ENCODE measurements at regions of chr10 and their contacts with region 1.

Region 1: DNA sequence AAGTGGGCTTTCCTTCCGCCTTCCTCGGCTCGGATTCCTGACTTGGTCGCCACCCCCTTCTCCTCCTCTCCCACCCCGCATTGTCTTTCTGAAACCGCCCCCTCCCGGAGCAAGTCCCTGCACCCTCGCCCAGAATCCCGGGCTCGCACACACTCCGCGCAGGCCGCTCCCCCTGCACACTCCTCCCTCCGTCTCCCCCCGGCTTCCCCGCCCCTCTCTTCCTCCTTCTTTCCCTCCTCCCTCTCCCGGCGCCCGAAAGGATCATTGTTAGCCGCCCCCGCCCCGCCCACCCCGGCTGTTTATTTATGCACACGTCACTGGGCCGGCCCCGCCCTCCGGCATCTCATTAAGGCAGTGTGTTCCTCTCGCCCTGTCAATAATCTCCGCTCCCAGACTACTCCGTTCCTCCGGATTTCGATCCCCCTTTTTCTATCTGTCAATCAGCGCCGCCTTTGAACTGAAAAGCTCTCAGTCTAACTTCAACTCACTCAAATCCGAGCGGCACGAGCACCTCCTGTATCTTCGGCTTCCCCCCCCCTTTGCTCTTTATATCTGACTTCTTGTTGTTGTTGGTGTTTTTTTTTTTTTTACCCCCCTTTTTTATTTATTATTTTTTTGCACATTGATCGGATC is at the start of gene TCF7L2:
- DNase-seq: peak; percentile 98
- H3K4me3 ChIP-seq: peak within 1 kb of the TSS; percentile 70 to 91 (median 90)
- H3K27ac ChIP-seq: peak within 1 kb of the TSS; percentile 87 to 97 (median 96)
- H3K4me1 ChIP-seq: peaks cover 0 to 38% (median 30%) of the 10 kb centered on the region in 4 donors
- H3K27me3 ChIP-seq: no peaks in the 10 kb centered on the region
- CTCF ChIP-seq: no peak
- EP300 ChIP-seq: no peak
- POLR2A ChIP-seq: peak; percentile 38 to 68
- total RNA-seq, gene TCF7L2: 15.3 to 40.4 (median 23.3) TPM

Region 2: DNA sequence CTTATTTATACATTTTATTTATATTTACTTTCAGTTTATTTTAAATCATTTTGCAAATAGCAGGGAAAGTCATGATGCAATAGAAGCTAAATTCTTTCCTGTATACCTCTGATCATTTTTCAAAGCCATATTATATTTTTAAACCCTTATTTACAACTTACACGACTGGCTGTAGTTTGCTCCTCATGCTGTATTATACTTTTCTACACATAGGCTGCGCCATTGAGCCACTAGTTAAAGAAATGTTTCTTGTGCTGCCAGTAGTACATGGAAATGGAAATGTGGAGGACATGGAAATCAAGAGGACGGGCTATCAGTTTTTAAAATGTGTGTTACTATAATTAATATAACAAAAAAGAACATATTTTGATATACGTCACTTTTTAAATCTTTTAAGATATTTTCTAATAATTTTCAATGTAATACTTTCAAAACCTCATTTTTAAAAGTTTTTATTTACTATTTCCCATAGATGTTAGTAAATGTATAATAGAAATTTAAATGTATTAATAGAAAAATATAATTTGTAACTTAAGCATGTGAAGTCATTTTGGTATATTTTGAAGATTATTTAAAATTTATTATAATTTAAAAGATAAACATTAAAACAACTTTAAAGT is 384.4 kb before region 1 on chr10:
- intact Hi-C with region 1: loop called (anchors 10 kb)
- DNase-seq: no peak
- H3K4me3 ChIP-seq: no peak overlapping the region
- H3K27ac ChIP-seq: no peak overlapping the region
- H3K4me1 ChIP-seq: no peaks in the 10 kb centered on the region
- H3K27me3 ChIP-seq: no peaks in the 10 kb centered on the region
- CTCF ChIP-seq: peak; percentile 24 to 73 (median 65)
- EP300 ChIP-seq: no peak
- POLR2A ChIP-seq: no peak

Region 3: DNA sequence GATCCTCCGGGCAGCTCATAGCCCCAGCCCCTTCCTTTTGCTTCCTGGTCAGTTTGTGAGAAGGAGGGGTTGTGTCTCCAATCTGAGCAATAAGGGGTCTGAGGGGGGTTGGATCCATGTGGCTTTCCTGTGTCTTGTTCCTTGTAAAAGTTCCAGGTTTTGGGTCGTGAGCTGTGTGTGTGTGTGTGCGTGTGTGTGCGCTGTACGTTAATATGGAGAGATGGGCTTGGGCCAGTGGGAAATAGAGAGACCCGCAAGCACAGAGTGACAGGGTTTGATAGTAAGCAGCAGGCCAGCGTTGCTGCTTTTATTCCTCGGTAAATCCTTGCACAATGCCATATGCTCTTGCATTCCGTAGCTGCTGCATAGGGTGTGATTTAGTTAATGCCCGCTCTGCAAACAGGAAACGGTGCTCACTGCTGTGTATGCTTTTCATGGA is 108.6 kb after region 1 on chr10:
- intact Hi-C with region 1: loop called (anchors 2 kb)
- DNase-seq: peak; percentile 64
- H3K4me3 ChIP-seq: peak overlapping the region in 3 of 4 donors; percentile 16 to 34 (median 24)
- H3K27ac ChIP-seq: peak overlapping the region; percentile 61 to 80 (median 68)
- H3K4me1 ChIP-seq: peaks cover 0 to 87% (median 86%) of the 10 kb centered on the region in 4 donors
- H3K27me3 ChIP-seq: no peaks in the 10 kb centered on the region
- CTCF ChIP-seq: no peak
- EP300 ChIP-seq: peak in 1 of 4 donors; percentile 42
- POLR2A ChIP-seq: no peak

Region 4: GRCh38 chr10:113126229-113127201 is 176.5 kb after region 1 on chr10:
- intact Hi-C with region 1: loop called (anchors 2 kb)
- DNase-seq: peak; percentile 86
- H3K4me3 ChIP-seq: peak overlapping the region in 3 of 4 donors; percentile 33 to 44 (median 39)
- H3K27ac ChIP-seq: peak overlapping the region in 2 of 4 donors; percentile 11 to 29
- H3K4me1 ChIP-seq: peaks cover 0 to 23% (median 17%) of the 10 kb centered on the region in 4 donors
- H3K27me3 ChIP-seq: no peaks in the 10 kb centered on the region
- CTCF ChIP-seq: peak in 1 of 4 experiments; percentile 83
- EP300 ChIP-seq: no peak
- POLR2A ChIP-seq: no peak

Region 5: DNA sequence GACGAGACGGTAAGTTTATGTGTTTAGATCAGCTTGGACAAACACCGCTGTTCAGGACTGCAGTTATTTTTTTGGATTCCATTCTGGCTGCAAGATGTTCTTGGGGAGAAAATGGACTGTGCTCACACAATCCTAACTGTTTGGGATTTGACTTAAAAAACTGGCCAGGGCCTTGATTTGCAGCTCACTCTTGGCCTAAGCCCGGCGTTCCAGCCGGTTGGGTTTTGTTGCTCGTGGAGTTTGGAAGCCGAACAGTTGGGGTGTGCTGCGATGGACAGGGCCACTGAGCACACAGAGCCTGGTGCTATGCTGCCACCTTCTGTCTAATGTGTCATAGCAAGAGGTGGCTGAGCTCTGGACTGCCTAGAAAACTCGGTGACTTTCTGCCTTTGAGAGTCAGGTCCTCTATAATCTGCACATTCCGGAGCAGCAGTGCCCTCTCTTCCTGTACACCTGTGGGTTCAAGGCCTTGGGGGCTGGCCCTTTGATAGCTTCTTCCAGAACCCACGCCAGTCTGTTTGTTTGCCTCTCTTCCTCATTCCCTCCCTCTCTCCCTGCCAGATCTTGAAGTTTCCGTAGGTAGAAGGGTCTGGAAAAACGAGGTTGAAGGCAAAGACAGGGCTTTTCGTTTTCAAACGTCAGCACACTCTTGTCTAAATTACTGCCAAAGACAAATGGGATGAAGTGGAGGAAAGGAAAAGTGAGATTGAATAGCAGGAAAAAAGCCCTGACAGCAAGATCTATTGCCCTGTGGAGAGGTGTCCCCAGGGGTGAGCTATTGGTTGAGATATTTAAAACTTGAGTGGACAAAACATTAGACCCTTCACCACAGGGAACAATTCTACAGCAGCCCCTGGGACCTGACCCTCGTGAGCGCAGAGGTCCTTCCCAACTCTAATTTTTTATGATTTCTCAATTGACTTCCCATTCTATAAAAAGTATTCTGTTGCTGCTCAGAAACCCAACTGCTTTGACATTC is 435.3 kb after region 1 on chr10:
- intact Hi-C with region 1: loop called (anchors 2 kb)
- DNase-seq: peak; percentile 96
- H3K4me3 ChIP-seq: no peak overlapping the region
- H3K27ac ChIP-seq: peak overlapping the region; percentile 11 to 54 (median 42)
- H3K4me1 ChIP-seq: peaks cover 0 to 56% (median 34%) of the 10 kb centered on the region in 4 donors
- H3K27me3 ChIP-seq: no peaks in the 10 kb centered on the region
- CTCF ChIP-seq: peak; percentile 74 to 83 (median 80)
- EP300 ChIP-seq: no peak
- POLR2A ChIP-seq: no peak

Measured in sigmoid colon (tissue), 7 donors.